Aorta (tissue), 5 donors: ENCODE measurements at regions of chr11 and their contacts with region 1.

Region 1: GRCh38 chr11:114307524-114308203 is 11.5 kb downstream of the NNMT start:
- DNase-seq: peak; percentile 87 to 91
- ATAC-seq: peak; percentile 87
- H3K4me3 ChIP-seq: peak overlapping the region in 1 of 2 donors; percentile 24
- H3K27ac ChIP-seq: peak overlapping the region; percentile 99 to 100
- H3K4me1 ChIP-seq: peaks cover 8 to 13% of the 10 kb centered on the region in 2 donors
- H3K27me3 ChIP-seq: no peaks in the 10 kb centered on the region

Region 2: GRCh38 chr11:114295676-114296604 is 11.7 kb before region 1 on chr11 and contains the start of gene NNMT:
- intact Hi-C with region 1: loop called in 1 of 2 experiments (anchors 2 kb)
- DNase-seq: peak; percentile 91
- ATAC-seq: peak; percentile 90
- H3K4me3 ChIP-seq: peak within 1 kb of the TSS; percentile 95 to 99
- H3K27ac ChIP-seq: peak within 1 kb of the TSS; percentile 90 to 100
- H3K4me1 ChIP-seq: no peaks in the 10 kb centered on the region
- H3K27me3 ChIP-seq: no peaks in the 10 kb centered on the region
- total RNA-seq, gene NNMT: 597 to 862 TPM